ENCODE measurements at regions of chr15 and their contacts with region 1.

Region 1: DNA sequence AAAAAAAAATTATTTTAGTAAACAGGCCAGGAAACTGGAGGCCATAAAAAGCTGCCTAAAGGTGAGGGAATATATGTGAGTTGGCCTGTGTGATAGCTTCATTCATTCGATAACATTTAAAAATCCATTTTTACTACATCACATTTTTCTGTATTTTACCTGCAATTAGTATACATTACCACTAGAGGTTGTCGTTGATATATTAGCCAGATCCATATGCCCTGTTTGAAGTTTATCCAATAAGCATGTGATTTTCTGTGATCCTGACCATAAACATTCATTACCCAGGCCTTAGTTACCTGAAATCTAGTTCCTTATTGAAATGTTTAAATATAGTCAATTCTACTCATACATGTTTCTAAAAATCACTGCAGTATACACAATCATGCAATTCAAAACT is 71.4 kb downstream of the ARNT2 start:
- DNase-seq: no peak
- ATAC-seq: no peak
- H3K4me3 ChIP-seq: no peak overlapping the region
- H3K27ac ChIP-seq: no peak overlapping the region
- H3K4me1 ChIP-seq: peaks cover 0 to 34% (median 11%) of the 10 kb centered on the region in 12 donors
- H3K27me3 ChIP-seq: peaks cover 0 to 7% (median 0%) of the 10 kb centered on the region in 9 donors
- CTCF ChIP-seq: peak in 2 of 12 donors; percentile 16 to 19
- POLR2A ChIP-seq: no peak

Region 2: GRCh38 chr15:80526556-80527340 is 51.2 kb after region 1 on chr15:
- intact Hi-C with region 1: loop called in 1 of 10 experiments (anchors 10 kb)
- DNase-seq: peak in 2 of 5 donors; percentile 23 to 37
- ATAC-seq: peak; percentile 63 to 89 (median 86)
- H3K4me3 ChIP-seq: no peak overlapping the region
- H3K27ac ChIP-seq: peak overlapping the region in 4 of 12 donors; percentile 7 to 61 (median 42)
- H3K4me1 ChIP-seq: peaks cover 0 to 34% (median 13%) of the 10 kb centered on the region in 12 donors
- H3K27me3 ChIP-seq: no peaks in the 10 kb centered on the region
- CTCF ChIP-seq: no peak
- POLR2A ChIP-seq: no peak